ENCODE measurements at regions of chr3 and their contacts with region 1.

Region 1: DNA sequence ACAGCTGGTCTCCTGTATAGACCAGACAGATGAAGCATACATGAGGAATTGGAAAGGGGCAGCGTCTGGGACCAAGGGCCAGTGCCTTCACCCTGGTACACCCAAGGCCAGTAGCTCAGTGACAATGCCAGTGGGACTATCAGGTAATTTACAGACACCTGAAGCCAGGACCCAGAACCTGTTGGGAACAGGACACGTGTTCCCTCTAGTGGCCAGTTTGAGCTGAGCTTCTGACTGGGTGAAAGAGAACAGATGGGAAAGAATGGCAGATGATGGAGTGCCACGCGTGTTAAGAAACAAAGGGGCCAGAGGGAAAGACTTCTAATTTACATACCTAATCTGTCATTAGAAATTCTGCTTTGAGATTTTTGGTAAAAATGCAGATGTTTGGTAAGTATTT is 5.1 kb upstream of the SLC25A38 start:
- DNase-seq: peak; percentile 57
- H3K4me3 Mint-ChIP-seq: no peak overlapping the region
- H3K27ac Mint-ChIP-seq: peak overlapping the region; percentile 34
- H3K4me1 Mint-ChIP-seq: peaks cover 20% of the 10 kb centered on the region
- H3K27me3 Mint-ChIP-seq: no peaks in the 10 kb centered on the region

Region 2: DNA sequence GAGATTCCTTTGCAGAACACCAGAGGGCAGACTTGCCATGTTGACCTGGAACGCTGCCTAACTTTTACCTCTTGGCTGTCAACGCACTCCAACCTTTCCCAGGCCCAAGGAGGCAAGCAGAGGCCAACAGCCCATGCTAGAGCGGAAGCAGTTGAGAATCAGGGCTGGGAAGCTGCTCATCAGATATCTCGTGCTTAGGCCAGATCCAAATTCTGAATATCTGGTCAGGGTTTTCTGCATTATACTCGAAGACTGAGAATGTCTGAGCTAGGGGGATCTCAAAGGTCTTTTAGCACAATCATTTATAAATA is 188.2 kb before region 1 on chr3:
- intact Hi-C with region 1: loop called (anchors 5 kb)
- DNase-seq: peak; percentile 54
- H3K4me3 Mint-ChIP-seq: no peak overlapping the region
- H3K27ac Mint-ChIP-seq: no peak overlapping the region
- H3K4me1 Mint-ChIP-seq: peaks cover 24% of the 10 kb centered on the region
- H3K27me3 Mint-ChIP-seq: no peaks in the 10 kb centered on the region

Region 3: DNA sequence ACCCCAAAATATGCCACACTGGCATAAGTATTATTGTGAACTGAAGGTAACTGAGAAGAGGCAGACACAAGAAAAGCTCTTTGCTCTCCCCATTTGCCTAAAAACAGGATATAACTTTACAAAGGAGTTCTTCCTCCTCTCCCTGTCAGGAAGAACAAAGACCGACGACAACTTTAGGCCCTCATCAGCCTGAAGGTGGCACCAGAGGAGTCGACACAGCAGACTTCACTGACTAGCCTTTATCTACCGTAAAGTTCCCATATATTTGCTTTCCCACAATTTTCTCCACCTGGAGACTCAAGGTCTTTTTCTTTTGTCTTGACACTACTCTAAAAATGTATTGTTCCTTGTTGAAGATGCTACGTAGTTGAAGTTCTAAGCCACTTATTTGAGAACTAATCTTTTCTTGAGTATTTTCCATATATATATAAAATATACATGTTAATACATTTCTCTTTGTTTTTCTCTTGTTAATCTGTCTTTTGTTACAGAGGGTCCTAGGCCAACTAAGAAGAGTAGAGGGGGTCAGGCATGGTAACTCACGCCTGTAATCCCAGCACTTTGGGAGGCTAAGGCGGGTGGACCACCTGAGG is 169.5 kb before region 1 on chr3:
- intact Hi-C with region 1: loop called (anchors 5 kb)
- DNase-seq: no peak
- H3K4me3 Mint-ChIP-seq: no peak overlapping the region
- H3K27ac Mint-ChIP-seq: no peak overlapping the region
- H3K4me1 Mint-ChIP-seq: peaks cover 10% of the 10 kb centered on the region
- H3K27me3 Mint-ChIP-seq: peaks cover 25% of the 10 kb centered on the region

Region 4: GRCh38 chr3:39428745-39429201 is 50.7 kb after region 1 on chr3:
- intact Hi-C with region 1: no loop called
- DNase-seq: no peak
- H3K4me3 Mint-ChIP-seq: no peak overlapping the region
- H3K27ac Mint-ChIP-seq: no peak overlapping the region
- H3K4me1 Mint-ChIP-seq: no peaks in the 10 kb centered on the region
- H3K27me3 Mint-ChIP-seq: peaks cover 4% of the 10 kb centered on the region

Region 5: GRCh38 chr3:40079203-40079846 is 701.2 kb after region 1 on chr3:
- intact Hi-C with region 1: no loop called
- DNase-seq: no peak
- H3K4me3 Mint-ChIP-seq: no peak overlapping the region
- H3K27ac Mint-ChIP-seq: no peak overlapping the region
- H3K4me1 Mint-ChIP-seq: no peaks in the 10 kb centered on the region
- H3K27me3 Mint-ChIP-seq: no peaks in the 10 kb centered on the region